CD4-positive, alpha-beta memory T cell (primary cell): ENCODE measurements at regions of chr5 and their contacts with region 1.

Region 1: GRCh38 chr5:91419571-91420537 is 36.7 kb upstream of the ARRDC3 start:
- DNase-seq: peak; percentile 57 to 68 (median 62)
- H3K4me3 ChIP-seq: no peak overlapping the region
- H3K4me3 Mint-ChIP-seq: no peak overlapping the region
- H3K27ac ChIP-seq: no peak overlapping the region
- H3K27ac Mint-ChIP-seq: no peak overlapping the region
- H3K4me1 ChIP-seq: no peaks in the 10 kb centered on the region
- H3K4me1 Mint-ChIP-seq: peaks cover 0 to 6% (median 1%) of the 10 kb centered on the region in 4 donors
- H3K27me3 ChIP-seq: no peaks in the 10 kb centered on the region
- H3K27me3 Mint-ChIP-seq: no peaks in the 10 kb centered on the region

Region 2: GRCh38 chr5:90802474-90803317 is 617.2 kb before region 1 on chr5:
- CTCF ChIA-PET with region 1: interaction called, 5 read pairs
- POLR2A ChIA-PET with region 1: no interaction called
- intact Hi-C with region 1: loop called (anchors 1 kb)
- DNase-seq: peak in 2 of 5 donors; percentile 4 to 10
- H3K4me3 ChIP-seq: no peak overlapping the region
- H3K4me3 Mint-ChIP-seq: no peak overlapping the region
- H3K27ac ChIP-seq: no peak overlapping the region
- H3K27ac Mint-ChIP-seq: no peak overlapping the region
- H3K4me1 ChIP-seq: no peaks in the 10 kb centered on the region
- H3K4me1 Mint-ChIP-seq: peaks cover 0 to 1% (median 0%) of the 10 kb centered on the region in 4 donors
- H3K27me3 ChIP-seq: no peaks in the 10 kb centered on the region
- H3K27me3 Mint-ChIP-seq: peaks cover 0 to 2% of the 10 kb centered on the region in 2 donors

Region 3: GRCh38 chr5:90932052-90932699 is 487.7 kb before region 1 on chr5:
- CTCF ChIA-PET with region 1: interaction called, 77 read pairs
- POLR2A ChIA-PET with region 1: no interaction called
- intact Hi-C with region 1: loop called (anchors 1 kb)
- DNase-seq: peak in 4 of 5 donors; percentile 7 to 26 (median 21)
- H3K4me3 ChIP-seq: no peak overlapping the region
- H3K4me3 Mint-ChIP-seq: no peak overlapping the region
- H3K27ac ChIP-seq: no peak overlapping the region
- H3K27ac Mint-ChIP-seq: no peak overlapping the region
- H3K4me1 ChIP-seq: no peaks in the 10 kb centered on the region
- H3K4me1 Mint-ChIP-seq: peaks cover 0 to 3% (median 0%) of the 10 kb centered on the region in 4 donors
- H3K27me3 ChIP-seq: no peaks in the 10 kb centered on the region
- H3K27me3 Mint-ChIP-seq: peaks cover 6 to 7% of the 10 kb centered on the region in 2 donors

Region 4: DNA sequence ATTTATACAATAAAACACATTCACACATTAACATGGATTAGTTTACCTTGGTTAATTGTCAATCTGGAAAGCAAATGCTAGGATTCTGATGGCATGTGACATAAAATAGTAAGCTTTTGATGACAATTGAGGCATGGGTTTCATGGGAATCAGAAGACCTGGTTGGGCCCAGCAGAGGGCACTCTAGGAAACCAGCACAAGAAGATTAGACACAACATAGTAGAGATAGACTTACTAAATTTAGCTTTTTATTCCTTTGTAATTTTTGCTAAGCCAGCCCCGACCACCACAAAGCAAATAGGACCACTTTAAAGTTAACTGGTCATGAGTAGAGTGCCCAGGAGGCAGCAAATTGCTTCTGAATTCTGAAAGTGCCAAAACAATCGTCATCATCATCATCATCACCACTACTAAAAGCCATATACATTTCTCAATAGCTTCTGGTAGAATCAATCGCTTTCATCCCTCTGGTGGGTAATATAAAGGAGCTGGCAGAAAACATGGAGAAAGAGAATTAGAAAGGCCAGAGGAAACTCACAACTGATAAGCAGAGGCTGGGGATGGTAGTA is 200.0 kb before region 1 on chr5:
- CTCF ChIA-PET with region 1: interaction called, 44 read pairs
- POLR2A ChIA-PET with region 1: no interaction called
- intact Hi-C with region 1: no loop called
- DNase-seq: peak in 3 of 5 donors; percentile 8 to 16 (median 15)
- H3K4me3 ChIP-seq: no peak overlapping the region
- H3K4me3 Mint-ChIP-seq: no peak overlapping the region
- H3K27ac ChIP-seq: no peak overlapping the region
- H3K27ac Mint-ChIP-seq: no peak overlapping the region
- H3K4me1 ChIP-seq: no peaks in the 10 kb centered on the region
- H3K4me1 Mint-ChIP-seq: no peaks in the 10 kb centered on the region
- H3K27me3 ChIP-seq: no peaks in the 10 kb centered on the region
- H3K27me3 Mint-ChIP-seq: peaks cover 2 to 10% of the 10 kb centered on the region in 2 donors

Region 5: GRCh38 chr5:91288118-91288916 is 131.5 kb before region 1 on chr5:
- CTCF ChIA-PET with region 1: no interaction called
- POLR2A ChIA-PET with region 1: no interaction called
- intact Hi-C with region 1: no loop called
- DNase-seq: no peak
- H3K4me3 ChIP-seq: no peak overlapping the region
- H3K4me3 Mint-ChIP-seq: no peak overlapping the region
- H3K27ac ChIP-seq: no peak overlapping the region
- H3K27ac Mint-ChIP-seq: no peak overlapping the region
- H3K4me1 ChIP-seq: no peaks in the 10 kb centered on the region
- H3K4me1 Mint-ChIP-seq: peaks cover 0 to under 1% (median 0%) of the 10 kb centered on the region in 4 donors
- H3K27me3 ChIP-seq: no peaks in the 10 kb centered on the region
- H3K27me3 Mint-ChIP-seq: peaks cover 0 to under 1% of the 10 kb centered on the region in 2 donors

Region 6: GRCh38 chr5:91403438-91403837 is 16.4 kb before region 1 on chr5:
- CTCF ChIA-PET with region 1: interaction called, 40 read pairs
- POLR2A ChIA-PET with region 1: no interaction called
- intact Hi-C with region 1: no loop called
- DNase-seq: no peak
- H3K4me3 ChIP-seq: no peak overlapping the region
- H3K4me3 Mint-ChIP-seq: no peak overlapping the region
- H3K27ac ChIP-seq: no peak overlapping the region
- H3K27ac Mint-ChIP-seq: no peak overlapping the region
- H3K4me1 ChIP-seq: no peaks in the 10 kb centered on the region
- H3K4me1 Mint-ChIP-seq: no peaks in the 10 kb centered on the region
- H3K27me3 ChIP-seq: no peaks in the 10 kb centered on the region
- H3K27me3 Mint-ChIP-seq: no peaks in the 10 kb centered on the region

Region 7: DNA sequence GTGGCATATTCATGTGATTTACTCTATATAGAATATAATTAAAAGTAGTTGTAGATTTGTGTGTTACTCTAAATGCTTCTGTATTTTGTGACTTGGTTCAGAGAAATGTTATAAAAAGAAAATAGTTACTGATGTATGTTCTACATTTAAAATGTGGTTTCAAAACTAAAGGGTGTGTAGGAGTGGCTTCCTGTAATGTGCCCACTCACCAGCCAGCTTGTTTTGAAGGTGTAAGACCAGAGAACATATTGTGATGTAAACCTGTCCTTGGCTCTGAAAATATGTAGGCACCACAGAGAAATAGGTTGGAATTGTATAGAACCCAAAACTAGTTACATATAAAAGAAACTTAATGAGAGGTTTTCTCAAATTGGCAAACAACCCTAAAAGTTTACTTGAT is 14.5 kb after region 1 on chr5:
- CTCF ChIA-PET with region 1: interaction called, 69 read pairs
- POLR2A ChIA-PET with region 1: no interaction called
- intact Hi-C with region 1: no loop called
- DNase-seq: peak in 3 of 5 donors; percentile 4 to 13 (median 4)
- H3K4me3 ChIP-seq: no peak overlapping the region
- H3K4me3 Mint-ChIP-seq: peak overlapping the region in 6 of 8 donors; percentile 14 to 68 (median 43)
- H3K27ac ChIP-seq: no peak overlapping the region
- H3K27ac Mint-ChIP-seq: peak overlapping the region; percentile 45 to 90 (median 80)
- H3K4me1 ChIP-seq: peaks cover 20% of the 10 kb centered on the region
- H3K4me1 Mint-ChIP-seq: peaks cover 16 to 33% (median 20%) of the 10 kb centered on the region in 4 donors
- H3K27me3 ChIP-seq: no peaks in the 10 kb centered on the region
- H3K27me3 Mint-ChIP-seq: no peaks in the 10 kb centered on the region

Region 8: DNA sequence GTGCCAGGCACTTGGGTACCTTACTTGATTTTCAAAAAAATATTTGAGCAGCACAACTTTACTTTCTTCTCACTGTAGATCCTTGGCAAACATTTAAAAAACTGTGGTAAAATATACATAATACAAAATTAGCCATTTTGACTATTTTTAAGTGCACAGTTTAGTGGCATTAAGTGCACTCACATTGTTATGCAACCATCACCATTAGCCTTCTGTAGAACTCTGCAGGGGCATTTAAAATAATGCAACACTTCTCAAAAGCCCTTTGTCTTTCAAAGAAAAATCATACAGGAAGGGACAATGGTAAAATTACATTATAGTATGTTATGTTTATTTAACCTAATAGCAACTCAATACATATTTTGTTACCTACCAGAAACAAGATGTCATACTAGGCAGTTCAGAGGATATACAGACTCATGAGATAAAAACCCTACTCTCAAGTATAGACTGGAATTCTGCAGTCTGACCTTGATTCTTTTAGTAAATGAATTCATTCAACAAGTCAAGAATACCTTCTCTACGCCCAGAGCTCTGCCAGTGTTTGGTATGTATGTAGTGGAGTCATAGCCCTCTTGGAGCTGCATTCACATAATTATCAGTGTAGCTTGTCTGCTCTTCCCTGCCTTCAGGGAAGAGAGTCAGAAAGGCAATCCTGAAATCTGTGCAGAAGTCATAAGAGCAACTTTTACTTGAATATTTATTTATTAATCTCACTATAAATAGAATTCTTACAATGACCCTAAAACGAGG is 37.2 kb after region 1 on chr5:
- CTCF ChIA-PET with region 1: no interaction called
- POLR2A ChIA-PET with region 1: no interaction called
- intact Hi-C with region 1: no loop called
- DNase-seq: no peak
- H3K4me3 ChIP-seq: no peak overlapping the region
- H3K4me3 Mint-ChIP-seq: no peak overlapping the region
- H3K27ac ChIP-seq: no peak overlapping the region
- H3K27ac Mint-ChIP-seq: no peak overlapping the region
- H3K4me1 ChIP-seq: no peaks in the 10 kb centered on the region
- H3K4me1 Mint-ChIP-seq: peaks cover 0 to 1% (median 0%) of the 10 kb centered on the region in 4 donors
- H3K27me3 ChIP-seq: no peaks in the 10 kb centered on the region
- H3K27me3 Mint-ChIP-seq: peaks cover 0 to 2% of the 10 kb centered on the region in 2 donors